A673 (cell line): ENCODE measurements at regions of chr9 and their contacts with region 1.

Region 1: GRCh38 chr9:32326146-32326545 is 58.3 kb upstream of the ACO1 start:
- DNase-seq: no peak
- H3K4me3 ChIP-seq: no peak overlapping the region
- H3K27ac ChIP-seq: no peak overlapping the region
- H3K4me1 ChIP-seq: no peaks in the 10 kb centered on the region
- H3K27me3 ChIP-seq: no peaks in the 10 kb centered on the region
- CTCF ChIP-seq: no peak

Region 2: DNA sequence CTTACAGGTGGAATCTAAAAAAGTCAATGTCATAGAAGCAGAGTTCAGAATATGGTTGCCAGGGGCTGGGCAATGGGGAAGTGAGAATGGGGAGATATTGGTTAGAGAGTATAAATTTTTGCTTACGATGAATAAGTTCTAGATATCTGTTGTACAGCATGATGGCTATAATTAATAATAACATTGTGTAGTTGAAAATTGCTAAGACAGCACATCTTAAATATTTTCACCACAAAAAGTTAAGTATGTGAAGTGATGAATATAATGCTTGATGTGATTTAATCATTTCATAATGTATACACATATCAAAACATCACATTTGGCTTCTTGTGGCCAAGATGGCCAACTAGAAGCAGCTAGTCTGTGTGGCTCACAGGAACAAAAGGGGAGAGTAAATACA is 367.6 kb before region 1 on chr9:
- CTCF ChIA-PET with region 1: no interaction called
- POLR2A ChIA-PET with region 1: no interaction called
- intact Hi-C with region 1: no loop called
- DNase-seq: no peak
- H3K4me3 ChIP-seq: no peak overlapping the region
- H3K27ac ChIP-seq: no peak overlapping the region
- H3K4me1 ChIP-seq: no peaks in the 10 kb centered on the region
- H3K27me3 ChIP-seq: no peaks in the 10 kb centered on the region
- CTCF ChIP-seq: no peak

Region 3: DNA sequence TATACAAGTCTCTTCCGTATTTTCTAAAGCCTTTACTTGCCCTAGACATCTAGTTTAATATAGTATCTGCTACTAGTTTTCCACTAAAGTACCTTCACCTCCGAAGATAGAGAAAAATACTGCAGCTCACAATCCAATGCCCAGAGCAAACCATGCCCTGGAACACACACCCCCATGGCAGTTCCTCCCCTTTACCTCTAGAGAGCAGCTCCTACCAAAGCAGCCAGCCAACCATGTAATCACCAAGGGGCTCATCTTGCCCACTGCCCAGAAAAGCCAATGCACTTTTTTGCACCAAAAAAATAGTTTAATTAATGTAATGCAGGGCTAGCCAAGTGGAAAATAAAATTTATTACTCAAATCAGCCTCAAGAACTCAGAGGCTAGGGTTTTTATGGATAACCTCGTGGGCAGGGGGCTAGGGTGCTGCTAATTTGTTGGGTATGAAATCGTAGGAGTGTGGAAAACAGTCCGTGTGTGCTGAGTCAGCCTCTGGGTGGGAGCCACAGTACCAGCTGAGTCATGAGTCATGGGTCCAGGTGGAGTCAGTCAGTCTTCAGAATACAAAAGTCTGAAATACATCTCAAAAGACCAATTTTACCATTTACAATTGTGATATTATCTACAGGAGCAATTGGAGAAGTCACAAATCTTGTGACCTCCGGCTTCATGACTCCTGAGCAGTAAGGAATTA is 61.8 kb before region 1 on chr9:
- CTCF ChIA-PET with region 1: no interaction called
- POLR2A ChIA-PET with region 1: no interaction called
- intact Hi-C with region 1: loop called (anchors 10 kb)
- DNase-seq: peak; percentile 10
- H3K4me3 ChIP-seq: no peak overlapping the region
- H3K27ac ChIP-seq: no peak overlapping the region
- H3K4me1 ChIP-seq: no peaks in the 10 kb centered on the region
- H3K27me3 ChIP-seq: no peaks in the 10 kb centered on the region
- CTCF ChIP-seq: peak; percentile 31; the same call in 1 of the 2 replicates

Region 4: GRCh38 chr9:32419921-32420320 is 93.8 kb after region 1 on chr9:
- CTCF ChIA-PET with region 1: no interaction called
- POLR2A ChIA-PET with region 1: no interaction called
- intact Hi-C with region 1: no loop called
- DNase-seq: no peak
- H3K4me3 ChIP-seq: no peak overlapping the region
- H3K27ac ChIP-seq: no peak overlapping the region
- H3K4me1 ChIP-seq: no peaks in the 10 kb centered on the region
- H3K27me3 ChIP-seq: no peaks in the 10 kb centered on the region
- CTCF ChIP-seq: no peak

Region 5: DNA sequence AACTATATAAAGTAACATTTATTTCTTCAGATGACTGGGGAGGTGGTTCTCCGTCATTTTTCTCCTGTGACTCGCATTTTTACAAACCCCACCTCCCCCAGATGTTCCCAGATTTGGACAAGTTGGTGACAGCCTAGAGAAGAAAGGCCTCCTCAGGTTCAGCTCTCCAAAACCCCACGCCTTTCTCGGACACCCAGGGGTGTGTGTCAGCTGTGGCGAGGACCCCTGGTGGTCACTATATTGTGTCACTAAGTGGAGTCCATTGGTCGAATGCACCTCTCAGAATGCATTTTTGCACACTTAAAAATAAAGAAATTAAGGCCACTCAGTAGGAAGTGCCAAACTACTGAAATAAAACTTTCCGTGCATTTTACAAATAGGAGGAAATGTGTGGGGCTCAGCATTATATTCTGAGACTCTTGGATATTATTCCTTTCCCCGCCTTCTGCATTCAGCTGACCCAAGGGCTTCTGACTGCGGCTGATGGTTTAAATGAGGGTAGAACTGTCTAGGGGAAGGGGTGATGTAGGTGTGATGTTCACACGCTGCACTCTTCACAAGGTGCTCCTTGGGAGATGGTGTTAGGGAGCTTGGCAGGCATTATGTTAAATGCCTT is 105.9 kb after region 1 on chr9:
- CTCF ChIA-PET with region 1: no interaction called
- POLR2A ChIA-PET with region 1: no interaction called
- intact Hi-C with region 1: no loop called
- DNase-seq: peak; percentile 40
- H3K4me3 ChIP-seq: no peak overlapping the region
- H3K27ac ChIP-seq: no peak overlapping the region
- H3K4me1 ChIP-seq: no peaks in the 10 kb centered on the region
- H3K27me3 ChIP-seq: no peaks in the 10 kb centered on the region
- CTCF ChIP-seq: peak; percentile 60